ENCODE measurements at regions of chr1 and their contacts with region 1.

Region 1: GRCh38 chr1:151968058-151968457 is 25.6 kb downstream of the S100A10 start:
- DNase-seq: no peak
- H3K4me3 ChIP-seq: no peak overlapping the region
- CTCF ChIP-seq: peak; percentile 66

Region 2: DNA sequence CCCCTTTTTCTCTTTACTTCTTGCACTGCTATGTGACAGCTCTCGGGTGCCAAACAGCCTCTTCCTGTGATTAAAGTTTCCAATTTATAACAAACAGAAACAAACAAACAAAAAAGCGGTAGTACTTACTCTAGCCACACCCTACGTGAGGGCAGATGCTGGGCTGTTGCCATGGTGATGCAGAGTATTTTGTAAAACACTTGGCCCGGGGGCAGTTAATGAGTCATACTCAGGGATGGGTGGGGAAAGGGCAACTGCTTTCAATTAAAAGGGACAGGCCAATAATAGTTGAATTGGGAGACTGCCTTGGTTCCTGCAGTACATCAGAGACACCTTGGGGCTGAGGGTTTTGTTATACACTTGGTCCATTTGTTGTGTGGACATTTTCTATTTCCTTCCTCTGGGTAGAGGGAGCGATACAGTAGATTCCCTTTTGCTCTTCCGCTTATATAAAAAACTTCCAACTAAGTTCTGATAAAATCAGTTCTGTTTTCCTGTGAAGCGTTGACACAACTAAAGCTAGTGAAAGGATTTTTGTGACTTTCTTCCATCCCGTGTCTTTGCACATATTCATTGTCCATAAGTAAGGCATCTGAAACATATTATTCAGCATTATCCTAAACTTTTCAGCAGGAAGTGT is 22.2 kb before region 1 on chr1:
- CTCF ChIA-PET with region 1: interaction called, 22 read pairs
- POLR2A ChIA-PET with region 1: no interaction called
- DNase-seq: peak; percentile 62
- H3K4me3 ChIP-seq: no peak overlapping the region
- CTCF ChIP-seq: no peak

Region 3: DNA sequence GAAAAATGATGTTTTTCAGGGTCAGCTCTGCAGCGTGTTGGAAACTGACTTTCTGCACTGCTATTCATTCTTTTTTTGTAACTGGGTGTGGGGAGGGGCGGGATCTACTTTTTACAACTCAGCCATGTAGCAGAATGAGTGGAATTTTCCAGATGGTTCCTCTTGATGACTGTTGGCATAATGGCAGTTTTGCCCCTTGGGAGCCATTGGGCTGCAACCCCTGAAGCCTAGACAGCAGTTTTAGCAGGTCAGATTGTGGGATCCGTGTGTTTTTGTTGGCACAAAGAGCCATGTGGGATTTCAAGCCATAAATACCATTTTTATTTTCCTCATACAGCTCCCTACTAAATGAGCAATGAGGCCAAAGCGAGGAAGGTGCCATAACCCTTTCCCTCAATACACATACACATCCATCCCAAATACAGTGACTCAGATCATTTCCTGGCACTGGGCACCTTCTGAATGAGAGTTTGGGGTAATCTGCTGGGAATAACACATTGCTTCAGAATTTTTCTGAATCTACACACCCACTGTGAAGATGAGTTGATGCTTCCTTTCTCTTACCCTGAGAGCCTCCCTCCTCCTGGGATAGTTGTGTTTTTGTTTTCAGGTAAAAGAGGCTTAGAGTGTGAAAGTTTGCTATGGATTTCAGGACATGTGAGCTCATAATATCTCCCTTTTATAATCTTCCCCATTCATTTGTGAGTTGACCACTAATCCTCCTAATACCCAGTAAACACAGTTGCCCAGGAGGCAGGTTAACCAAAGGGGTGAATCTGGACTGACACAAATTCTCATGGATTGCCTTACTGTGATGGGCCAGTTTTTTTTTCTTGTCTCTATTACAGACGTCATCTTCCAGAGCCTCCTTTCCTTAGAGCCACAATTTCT is 12.5 kb after region 1 on chr1:
- CTCF ChIA-PET with region 1: interaction called, 104 read pairs
- POLR2A ChIA-PET with region 1: interaction called, 3 read pairs
- DNase-seq: peak; percentile 84
- H3K4me3 ChIP-seq: no peak overlapping the region
- CTCF ChIP-seq: no peak

Region 4: DNA sequence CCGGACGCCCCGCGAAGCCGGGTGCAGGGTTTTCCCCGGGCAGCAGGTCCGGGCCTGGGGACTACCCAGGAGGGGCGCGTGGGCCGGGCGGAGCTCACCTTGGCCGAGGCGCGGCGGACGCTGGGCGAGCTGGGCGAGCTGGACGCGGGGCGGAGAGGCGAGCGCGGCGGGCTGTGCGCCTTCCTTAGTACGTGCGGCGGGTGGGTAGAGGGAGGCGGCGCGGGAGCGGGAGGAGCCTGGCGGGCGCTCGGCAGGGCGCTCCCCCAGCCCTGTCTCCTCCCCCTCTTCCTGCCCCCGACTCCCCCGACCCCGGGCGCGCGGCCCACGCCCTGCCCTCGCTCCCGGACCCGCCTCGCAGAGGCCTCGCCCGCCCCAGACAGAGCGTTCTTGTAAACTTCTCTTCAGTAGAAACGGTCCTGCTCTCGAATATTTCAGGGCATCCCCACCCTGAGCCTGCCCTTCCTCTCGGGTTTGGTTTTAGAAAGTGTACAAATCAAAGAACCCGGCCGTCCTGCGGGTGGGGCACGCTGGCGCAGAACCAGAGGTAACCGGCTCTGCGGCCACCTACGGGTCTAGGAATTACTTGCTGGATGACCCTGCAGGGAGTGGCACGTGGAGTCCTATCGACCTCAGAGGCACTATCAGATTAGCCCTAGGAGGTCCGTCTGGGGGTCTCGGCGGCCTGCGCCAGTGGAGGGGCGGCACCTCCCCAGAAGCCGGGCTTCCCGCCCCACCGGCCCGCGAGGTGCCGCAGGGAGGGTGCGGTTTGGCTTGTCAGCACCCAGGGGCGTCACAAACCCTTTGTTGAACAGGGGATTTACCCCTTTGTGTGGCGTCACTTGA is 25.8 kb after region 1 on chr1 and contains the start of gene S100A10:
- CTCF ChIA-PET with region 1: interaction called, 370 read pairs
- POLR2A ChIA-PET with region 1: interaction called, 8 read pairs
- DNase-seq: no peak
- H3K4me3 ChIP-seq: peak within 1 kb of the TSS; percentile 94
- CTCF ChIP-seq: no peak